ENCODE measurements at regions of chr19 and their contacts with region 1.

Region 1: GRCh38 chr19:9945319-9945966 is 9.1 kb upstream of the OLFM2 start:
- DNase-seq: peak; percentile 87
- ATAC-seq: peak; percentile 92
- H3K4me3 ChIP-seq: peak overlapping the region; percentile 24; the same call in 1 of the 2 replicates
- H3K27ac ChIP-seq: peak overlapping the region; percentile 88
- H3K4me1 ChIP-seq: peaks cover 17% of the 10 kb centered on the region
- H3K27me3 ChIP-seq: no peaks in the 10 kb centered on the region
- CTCF ChIP-seq: 0 out of 2 replicates have a peak, but pooled peaks have one; percentile 16

Region 2: DNA sequence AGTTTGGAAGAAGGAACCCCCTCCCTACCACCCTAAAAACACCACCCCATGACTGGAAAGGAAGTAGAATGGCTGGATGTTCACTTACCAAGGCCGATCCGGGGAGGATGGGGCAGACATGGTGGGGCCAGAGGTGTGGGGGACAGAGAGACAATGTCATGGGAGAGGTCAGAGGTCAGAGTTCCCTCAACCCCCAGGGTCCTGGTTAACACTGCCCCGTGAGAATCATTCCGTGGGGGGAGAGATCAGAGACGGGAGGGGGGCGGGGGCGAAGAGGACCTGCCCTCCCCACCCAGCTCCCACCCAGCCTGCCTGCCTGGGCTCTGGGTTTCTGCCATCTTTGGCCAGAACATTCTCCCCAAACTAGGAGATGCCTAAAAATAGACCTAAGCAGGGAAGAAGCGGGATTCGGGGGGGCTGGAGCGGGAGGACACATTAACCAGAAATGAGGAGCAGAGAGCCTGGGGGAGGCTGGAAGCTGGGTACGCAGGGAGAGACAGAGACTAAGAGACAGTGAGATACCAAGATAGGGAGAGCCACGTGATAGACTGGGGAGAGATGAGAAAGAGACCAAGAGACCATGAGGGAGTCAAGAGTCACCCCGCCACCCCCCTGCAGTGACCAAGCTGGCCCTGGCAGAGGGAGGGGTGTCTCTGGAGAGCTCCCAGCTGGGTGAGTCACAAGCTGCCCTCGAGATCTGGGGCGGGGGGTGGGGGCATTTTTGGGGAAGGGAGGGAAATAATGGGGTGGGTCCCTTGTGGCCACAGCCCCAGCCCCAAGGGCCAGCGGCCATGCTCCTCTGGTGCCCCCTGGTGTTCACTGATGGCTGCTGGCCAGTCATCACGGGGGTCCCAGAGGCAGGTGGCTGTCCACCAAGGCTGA is 1258.0 kb after region 1 on chr19:
- CTCF ChIA-PET with region 1: interaction called, 13 read pairs
- POLR2A ChIA-PET with region 1: no interaction called
- intact Hi-C with region 1: no loop called
- DNase-seq: peak; percentile 79
- ATAC-seq: peak; percentile 82
- H3K4me3 ChIP-seq: no peak overlapping the region
- H3K27ac ChIP-seq: peak overlapping the region; percentile 15; the same call in 1 of the 2 replicates
- H3K4me1 ChIP-seq: peaks cover 11% of the 10 kb centered on the region
- H3K27me3 ChIP-seq: no peaks in the 10 kb centered on the region
- CTCF ChIP-seq: peak; percentile 90

Measured in PC-3 (cell line).